GM12878 (cell line): ENCODE measurements at regions of chr1 and their contacts with region 1.

Region 1: DNA sequence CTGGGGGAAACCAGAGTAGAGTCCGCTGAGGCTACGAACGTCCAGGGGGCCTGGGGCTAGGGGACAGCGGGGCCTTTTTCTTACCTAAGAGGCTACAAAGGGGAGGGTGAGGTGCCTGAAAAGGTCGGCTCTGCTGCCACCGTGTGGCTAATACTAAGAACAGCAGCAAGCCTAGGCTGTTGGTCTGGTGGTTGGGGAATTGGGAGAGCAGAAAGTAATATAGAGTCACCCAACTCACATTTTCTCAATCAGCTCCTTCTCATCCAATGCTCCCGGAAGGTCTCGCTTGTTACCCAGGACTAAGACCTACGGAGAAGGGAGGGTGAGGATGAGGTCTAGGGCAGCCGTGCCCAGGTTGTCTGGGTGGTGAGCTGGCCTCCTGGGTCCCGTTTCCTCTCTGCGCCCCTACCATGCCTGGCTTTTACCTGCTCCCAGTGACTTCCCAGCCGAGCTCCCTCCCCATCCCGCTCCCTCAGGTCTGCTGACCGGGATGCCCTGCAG is 9.3 kb downstream of the ARL8A start:
- DNase-seq: no peak
- ATAC-seq: peak; percentile 97
- H3K4me3 ChIP-seq: no peak overlapping the region
- H3K27ac ChIP-seq: no peak overlapping the region
- H3K4me1 ChIP-seq: no peaks in the 10 kb centered on the region
- H3K27me3 ChIP-seq: no peaks in the 10 kb centered on the region
- CTCF ChIP-seq: peak; percentile 77 to 86 (median 84)
- EP300 ChIP-seq: no peak
- POLR2A ChIP-seq: no peak; the same call in 1 of the 2 replicates
- RAD21 ChIP-seq: peak; percentile 72

Region 2: GRCh38 chr1:201999625-202000238 is 135.5 kb before region 1 on chr1:
- CTCF ChIA-PET with region 1: interaction called, 48 read pairs
- POLR2A ChIA-PET with region 1: no interaction called
- RAD21 ChIA-PET with region 1: interaction called, 8 read pairs
- SMC1A ChIA-PET with region 1: interaction called, 14 read pairs
- in situ Hi-C with region 1: no loop called
- intact Hi-C with region 1: no loop called
- DNase-seq: no peak
- ATAC-seq: peak; percentile 92
- H3K4me3 ChIP-seq: no peak overlapping the region
- H3K27ac ChIP-seq: no peak overlapping the region
- H3K4me1 ChIP-seq: no peaks in the 10 kb centered on the region
- H3K27me3 ChIP-seq: no peaks in the 10 kb centered on the region
- CTCF ChIP-seq: peak; percentile 67 to 73 (median 72)
- EP300 ChIP-seq: no peak
- POLR2A ChIP-seq: 0 out of 2 replicates have a peak, but pooled peaks have one; percentile 25
- RAD21 ChIP-seq: peak; percentile 42; the same call in 1 of the 2 replicates

Region 3: GRCh38 chr1:202112839-202113672 is 22.2 kb before region 1 on chr1:
- CTCF ChIA-PET with region 1: interaction called, 28 read pairs
- POLR2A ChIA-PET with region 1: interaction called, 3 read pairs
- RAD21 ChIA-PET with region 1: interaction called, 11 read pairs
- SMC1A ChIA-PET with region 1: interaction called, 3 read pairs
- in situ Hi-C with region 1: no loop called
- intact Hi-C with region 1: no loop called
- DNase-seq: no peak
- ATAC-seq: peak; percentile 24
- H3K4me3 ChIP-seq: no peak overlapping the region
- H3K27ac ChIP-seq: no peak overlapping the region
- H3K4me1 ChIP-seq: peaks cover 14% of the 10 kb centered on the region
- H3K27me3 ChIP-seq: no peaks in the 10 kb centered on the region
- CTCF ChIP-seq: no peak
- EP300 ChIP-seq: no peak
- POLR2A ChIP-seq: no peak
- RAD21 ChIP-seq: no peak

Region 4: DNA sequence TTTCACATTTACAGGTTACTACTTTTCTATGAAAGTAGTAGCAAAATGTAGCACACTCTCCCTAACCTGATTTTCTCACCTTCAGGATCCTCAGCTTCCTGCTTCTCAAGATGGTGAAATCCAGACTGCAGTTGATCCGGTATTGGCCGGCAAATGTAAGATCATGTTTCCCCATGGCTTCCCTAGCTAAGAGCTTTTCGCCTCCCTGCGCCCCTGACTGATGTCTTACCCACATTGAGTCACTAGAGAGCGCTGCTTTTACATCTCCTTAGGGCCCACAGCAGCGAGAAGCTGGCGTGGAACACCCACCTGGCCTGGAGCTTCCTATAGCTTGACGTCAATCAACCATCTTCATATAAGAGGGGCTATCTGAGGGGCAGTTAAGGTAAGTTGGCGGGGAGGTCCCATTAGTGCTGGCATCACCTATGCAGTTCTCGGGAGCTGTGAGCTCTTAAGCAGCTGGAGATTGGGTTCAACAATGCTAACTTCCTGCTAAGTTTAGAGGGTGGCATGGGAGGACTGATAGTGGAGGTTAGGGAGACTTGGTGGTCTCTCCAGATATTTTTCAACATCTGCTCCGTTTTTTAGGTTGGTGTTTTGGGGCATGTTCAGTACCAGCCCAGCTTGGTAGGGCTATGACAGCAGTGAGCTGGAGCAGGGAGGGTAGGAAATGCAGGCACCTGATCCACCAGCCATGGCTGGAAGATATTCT is 19.7 kb after region 1 on chr1:
- CTCF ChIA-PET with region 1: interaction called, 20 read pairs
- POLR2A ChIA-PET with region 1: interaction called, 3 read pairs
- RAD21 ChIA-PET with region 1: interaction called, 4 read pairs
- SMC1A ChIA-PET with region 1: interaction called, 6 read pairs
- in situ Hi-C with region 1: no loop called
- intact Hi-C with region 1: no loop called
- DNase-seq: no peak
- ATAC-seq: peak; percentile 50
- H3K4me3 ChIP-seq: no peak overlapping the region
- H3K27ac ChIP-seq: no peak overlapping the region
- H3K4me1 ChIP-seq: peaks cover 16% of the 10 kb centered on the region
- H3K27me3 ChIP-seq: no peaks in the 10 kb centered on the region
- CTCF ChIP-seq: peak; percentile 65 to 70 (median 68); a peak in 5 of 6 replicates
- EP300 ChIP-seq: no peak
- POLR2A ChIP-seq: no peak
- RAD21 ChIP-seq: peak; percentile 65

Region 5: DNA sequence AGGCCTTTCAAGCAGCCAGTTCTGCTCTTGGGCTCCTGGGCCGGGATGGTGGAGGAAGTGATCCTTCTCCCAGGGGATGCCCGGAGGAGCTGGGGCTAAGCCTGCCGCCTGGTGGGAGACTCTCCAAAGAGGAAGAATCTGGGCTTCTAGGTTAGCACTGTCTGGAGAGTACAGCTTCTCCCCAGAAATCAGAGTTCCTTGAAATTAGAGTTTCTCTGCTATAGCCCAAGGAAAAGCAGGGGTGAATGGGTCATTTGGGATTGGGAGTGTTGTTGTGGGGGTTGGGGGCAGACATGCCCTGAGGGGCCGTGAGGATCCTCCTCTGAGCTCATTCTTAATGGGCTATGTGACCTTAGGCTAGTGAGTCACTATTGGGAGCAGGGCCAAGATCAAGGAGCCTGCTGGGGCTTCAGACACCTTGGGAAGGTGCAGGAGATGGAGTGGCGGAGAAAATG is 64.9 kb after region 1 on chr1:
- CTCF ChIA-PET with region 1: no interaction called
- POLR2A ChIA-PET with region 1: no interaction called
- RAD21 ChIA-PET with region 1: no interaction called
- SMC1A ChIA-PET with region 1: no interaction called
- in situ Hi-C with region 1: no loop called
- intact Hi-C with region 1: no loop called
- DNase-seq: no peak
- ATAC-seq: no peak
- H3K4me3 ChIP-seq: no peak overlapping the region
- H3K27ac ChIP-seq: no peak overlapping the region
- H3K4me1 ChIP-seq: no peaks in the 10 kb centered on the region
- H3K27me3 ChIP-seq: peaks cover 2 to 6% of the 10 kb centered on the region in 2 experiments; a peak in 3 of 4 replicates
- CTCF ChIP-seq: no peak
- EP300 ChIP-seq: no peak
- POLR2A ChIP-seq: no peak
- RAD21 ChIP-seq: no peak

Region 6: DNA sequence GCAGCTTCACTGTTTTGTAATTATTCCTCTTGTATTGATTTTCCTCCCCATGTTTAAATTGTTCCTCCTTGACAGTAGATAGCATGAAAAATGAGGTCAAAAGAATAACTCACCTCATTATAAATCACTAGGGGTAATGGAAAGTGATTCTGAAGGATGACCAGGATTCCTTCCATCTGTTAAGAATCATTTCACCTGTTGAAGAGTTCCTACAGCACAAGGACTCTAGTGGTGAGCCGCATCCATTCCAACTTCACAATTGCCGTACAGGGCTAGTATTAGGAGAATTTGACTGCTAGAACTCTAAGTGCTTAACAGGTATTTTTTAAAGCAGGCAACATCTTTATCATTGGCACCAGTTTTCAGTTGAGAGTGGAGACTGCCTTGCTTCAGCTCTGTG is 226.9 kb after region 1 on chr1:
- CTCF ChIA-PET with region 1: no interaction called
- POLR2A ChIA-PET with region 1: no interaction called
- RAD21 ChIA-PET with region 1: no interaction called
- SMC1A ChIA-PET with region 1: no interaction called
- in situ Hi-C with region 1: no loop called
- intact Hi-C with region 1: no loop called
- DNase-seq: no peak
- ATAC-seq: no peak
- H3K4me3 ChIP-seq: no peak overlapping the region
- H3K27ac ChIP-seq: no peak overlapping the region
- H3K4me1 ChIP-seq: no peaks in the 10 kb centered on the region
- H3K27me3 ChIP-seq: no peaks in the 10 kb centered on the region
- CTCF ChIP-seq: no peak
- EP300 ChIP-seq: no peak
- POLR2A ChIP-seq: no peak
- RAD21 ChIP-seq: no peak